ENCODE measurements at regions of chr22 and their contacts with region 1.

Region 1: DNA sequence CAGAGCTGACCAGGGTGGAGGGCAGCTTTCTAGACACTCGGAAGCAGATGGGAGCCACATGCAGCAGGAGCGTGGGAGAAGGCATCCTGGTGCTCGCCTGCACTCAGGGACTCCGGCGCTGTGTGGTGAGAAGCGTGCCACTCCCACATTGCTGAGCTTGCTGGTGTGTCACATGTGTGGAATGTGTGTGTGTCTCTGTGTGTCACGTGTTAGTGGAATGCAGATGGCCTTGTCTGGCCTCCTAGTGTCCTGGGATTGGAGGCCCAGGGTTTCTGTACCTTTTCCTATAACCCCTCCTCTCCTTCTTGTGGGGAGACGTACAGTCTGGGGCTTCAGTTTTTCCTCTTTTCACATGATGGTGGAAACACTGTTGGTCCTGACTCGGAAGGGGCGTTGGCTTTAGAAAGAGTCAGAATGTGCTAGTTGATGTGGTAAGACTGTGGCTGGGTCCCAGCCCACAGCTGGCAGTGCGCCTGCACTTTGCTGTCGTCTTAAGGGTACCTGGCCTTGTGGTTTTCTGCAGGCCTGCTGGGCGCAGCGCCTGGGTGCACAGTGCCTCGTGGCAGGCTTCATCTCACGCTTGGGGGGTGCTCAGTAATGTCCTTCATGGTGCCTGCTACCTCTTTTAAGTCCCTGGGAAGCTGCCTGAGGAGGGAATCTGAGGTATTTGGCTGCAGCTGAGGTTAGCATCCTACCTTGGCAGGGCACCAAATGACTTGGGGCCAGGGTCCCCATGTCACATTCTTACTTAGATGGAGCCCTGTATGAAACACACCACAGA is 61.8 kb downstream of the MED15 start:
- DNase-seq: peak; percentile 87 to 95
- H3K4me3 ChIP-seq: no peak overlapping the region
- H3K27ac ChIP-seq: peak overlapping the region; percentile 71 to 78
- H3K4me1 ChIP-seq: peaks cover 0 to 43% (median 35%) of the 10 kb centered on the region in 4 donors
- H3K27me3 ChIP-seq: no peaks in the 10 kb centered on the region
- CTCF ChIP-seq: no peak

Region 2: GRCh38 chr22:20429254-20430100 is 139.7 kb before region 1 on chr22:
- intact Hi-C with region 1: loop called (anchors 10 kb)
- DNase-seq: peak in 1 of 2 donors; percentile 65
- H3K4me3 ChIP-seq: peak overlapping the region; percentile 9 to 24
- H3K27ac ChIP-seq: no peak overlapping the region
- H3K4me1 ChIP-seq: peaks cover 0 to 37% (median 3%) of the 10 kb centered on the region in 4 donors
- H3K27me3 ChIP-seq: no peaks in the 10 kb centered on the region
- CTCF ChIP-seq: no peak

Region 3: GRCh38 chr22:20495861-20496681 is 73.1 kb before region 1 on chr22:
- intact Hi-C with region 1: loop called (anchors 5 kb)
- DNase-seq: peak; percentile 86 to 96
- H3K4me3 ChIP-seq: peak overlapping the region; percentile 65 to 68
- H3K27ac ChIP-seq: peak overlapping the region; percentile 98
- H3K4me1 ChIP-seq: peaks cover 0 to 23% (median 15%) of the 10 kb centered on the region in 4 donors
- H3K27me3 ChIP-seq: no peaks in the 10 kb centered on the region
- CTCF ChIP-seq: peak; percentile 84 to 85

Region 4: GRCh38 chr22:20671409-20672081 is 102.4 kb after region 1 on chr22:
- intact Hi-C with region 1: no loop called
- DNase-seq: no peak
- H3K4me3 ChIP-seq: no peak overlapping the region
- H3K27ac ChIP-seq: no peak overlapping the region
- H3K4me1 ChIP-seq: peaks cover 0 to 4% (median 0%) of the 10 kb centered on the region in 4 donors
- H3K27me3 ChIP-seq: peaks cover 0 to 40% of the 10 kb centered on the region in 2 donors
- CTCF ChIP-seq: no peak

Measured in tibial artery (tissue), 4 donors.